ENCODE measurements at regions of chr9 and their contacts with region 1.

Region 1: DNA sequence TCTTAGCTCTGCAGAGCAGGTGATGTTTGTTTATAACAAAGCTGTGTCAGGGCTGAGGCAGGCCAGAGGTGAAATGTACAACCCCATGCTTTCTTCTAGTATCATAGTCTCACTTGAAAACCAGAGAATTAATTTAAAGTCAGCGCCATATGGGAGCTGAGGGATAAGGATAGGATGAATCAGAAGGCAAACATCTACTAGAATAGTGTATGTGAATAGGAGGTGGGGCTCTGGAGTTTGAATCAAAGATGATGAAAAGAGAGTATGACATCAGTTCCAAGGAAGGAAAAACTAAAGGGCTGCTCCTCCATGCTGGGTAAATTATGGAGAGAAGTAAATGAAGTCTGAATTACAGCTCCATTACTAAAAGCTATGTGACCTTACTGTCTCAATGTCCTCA is 441.5 kb downstream of the RASEF start:
- DNase-seq: no peak
- H3K4me3 ChIP-seq: no peak overlapping the region
- H3K27ac ChIP-seq: no peak overlapping the region
- H3K4me1 ChIP-seq: no peaks in the 10 kb centered on the region
- H3K27me3 ChIP-seq: no peaks in the 10 kb centered on the region
- CTCF ChIP-seq: no peak
- POLR2A ChIP-seq: no peak

Region 2: DNA sequence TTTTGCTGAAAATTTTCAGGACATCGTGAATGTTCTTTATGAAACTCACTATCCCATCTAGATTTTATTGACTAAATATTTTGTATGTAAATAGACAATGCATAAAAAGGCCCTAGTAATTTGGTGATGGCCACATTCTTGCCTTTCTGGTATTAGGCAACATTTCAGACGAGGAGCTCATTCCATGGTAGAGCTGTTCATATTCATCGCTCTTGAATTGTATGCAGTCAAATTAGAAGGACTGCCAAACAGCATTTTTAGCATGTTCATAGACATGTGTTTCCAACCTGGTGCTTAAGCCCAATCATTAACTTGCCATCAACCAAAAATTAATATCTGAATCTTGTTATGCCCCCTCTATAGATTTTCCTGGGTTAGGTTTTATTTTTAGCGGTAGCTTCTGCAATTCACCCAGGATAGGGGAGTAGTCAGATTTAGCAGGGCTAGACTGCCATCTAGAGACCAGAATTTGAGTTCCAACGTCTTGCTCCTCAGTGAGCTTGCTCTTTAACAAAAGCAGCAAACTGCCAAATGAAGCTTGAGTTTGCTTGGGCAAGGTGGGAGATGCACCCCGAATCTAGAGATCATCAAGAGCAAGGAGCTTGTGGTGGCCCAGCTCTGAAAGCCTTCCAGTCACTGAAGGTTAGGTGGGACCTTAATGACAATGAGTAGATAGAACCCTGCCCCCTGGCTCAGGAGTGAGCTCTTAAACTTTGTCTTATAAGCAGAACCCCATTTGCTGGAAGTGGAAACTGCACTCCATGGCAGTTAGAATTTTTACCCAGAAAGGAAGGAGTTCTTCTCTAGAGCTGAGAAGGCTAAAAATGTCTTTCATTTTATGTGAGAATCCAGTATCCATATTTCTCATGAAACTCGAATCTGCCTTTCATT is 14.7 kb before region 1 on chr9:
- intact Hi-C with region 1: loop called (anchors 1 kb)
- DNase-seq: no peak
- H3K4me3 ChIP-seq: no peak overlapping the region
- H3K27ac ChIP-seq: no peak overlapping the region
- H3K4me1 ChIP-seq: no peaks in the 10 kb centered on the region
- H3K27me3 ChIP-seq: peaks cover 0 to 8% of the 10 kb centered on the region in 2 donors
- CTCF ChIP-seq: peak in 2 of 3 donors; percentile 47 to 50
- POLR2A ChIP-seq: no peak

Region 3: DNA sequence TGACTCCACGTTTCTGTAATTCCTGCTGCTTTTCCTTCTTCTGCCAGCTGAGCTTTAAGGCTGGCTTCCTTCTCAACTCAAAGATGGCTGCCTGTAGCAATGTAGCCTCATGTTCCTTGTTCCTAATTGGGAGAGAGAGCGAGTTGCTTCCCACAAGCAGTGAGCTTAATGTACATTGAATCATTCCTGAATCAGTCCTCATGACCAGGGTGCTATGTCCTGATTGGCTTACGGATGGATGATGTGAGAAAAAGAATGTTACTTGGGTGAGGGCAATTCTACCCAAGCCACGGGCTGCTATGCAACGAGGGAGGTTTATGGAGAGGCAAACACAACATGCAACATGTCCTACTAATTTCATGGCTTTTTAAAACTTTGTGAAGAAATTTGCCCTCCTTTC is 85.3 kb after region 1 on chr9:
- intact Hi-C with region 1: no loop called
- DNase-seq: no peak
- H3K4me3 ChIP-seq: no peak overlapping the region
- H3K27ac ChIP-seq: no peak overlapping the region
- H3K4me1 ChIP-seq: no peaks in the 10 kb centered on the region
- H3K27me3 ChIP-seq: no peaks in the 10 kb centered on the region
- CTCF ChIP-seq: no peak
- POLR2A ChIP-seq: no peak

Region 4: GRCh38 chr9:82797534-82797933 is 176.1 kb after region 1 on chr9:
- intact Hi-C with region 1: loop called (anchors 5 kb)
- DNase-seq: no peak
- H3K4me3 ChIP-seq: no peak overlapping the region
- H3K27ac ChIP-seq: no peak overlapping the region
- H3K4me1 ChIP-seq: no peaks in the 10 kb centered on the region
- H3K27me3 ChIP-seq: no peaks in the 10 kb centered on the region
- CTCF ChIP-seq: no peak
- POLR2A ChIP-seq: no peak

Measured in breast epithelium (tissue), 4 donors.